Activated CD4-positive, alpha-beta memory T cell treated with anti-CD3 and anti-CD28 coated beads, Interleukin-2, amount 10 ng/mL, durations not matched to agents 7 days and 5 days (primary cell): ENCODE measurements at regions of chr19 and their contacts with region 1.

Region 1: GRCh38 chr19:49911381-49912145 is 14.9 kb upstream of the IL4I1 start:
- DNase-seq: no peak
- H3K4me3 Mint-ChIP-seq: no peak overlapping the region
- H3K27ac Mint-ChIP-seq: peak overlapping the region; percentile 71
- H3K4me1 Mint-ChIP-seq: peaks cover 46% of the 10 kb centered on the region
- H3K27me3 Mint-ChIP-seq: no peaks in the 10 kb centered on the region

Region 2: GRCh38 chr19:49712397-49712859 is 199.1 kb before region 1 on chr19:
- CTCF ChIA-PET with region 1: no interaction called
- POLR2A ChIA-PET with region 1: no interaction called
- DNase-seq: no peak
- H3K4me3 Mint-ChIP-seq: no peak overlapping the region
- H3K27ac Mint-ChIP-seq: no peak overlapping the region
- H3K4me1 Mint-ChIP-seq: peaks cover 13% of the 10 kb centered on the region
- H3K27me3 Mint-ChIP-seq: no peaks in the 10 kb centered on the region

Region 3: DNA sequence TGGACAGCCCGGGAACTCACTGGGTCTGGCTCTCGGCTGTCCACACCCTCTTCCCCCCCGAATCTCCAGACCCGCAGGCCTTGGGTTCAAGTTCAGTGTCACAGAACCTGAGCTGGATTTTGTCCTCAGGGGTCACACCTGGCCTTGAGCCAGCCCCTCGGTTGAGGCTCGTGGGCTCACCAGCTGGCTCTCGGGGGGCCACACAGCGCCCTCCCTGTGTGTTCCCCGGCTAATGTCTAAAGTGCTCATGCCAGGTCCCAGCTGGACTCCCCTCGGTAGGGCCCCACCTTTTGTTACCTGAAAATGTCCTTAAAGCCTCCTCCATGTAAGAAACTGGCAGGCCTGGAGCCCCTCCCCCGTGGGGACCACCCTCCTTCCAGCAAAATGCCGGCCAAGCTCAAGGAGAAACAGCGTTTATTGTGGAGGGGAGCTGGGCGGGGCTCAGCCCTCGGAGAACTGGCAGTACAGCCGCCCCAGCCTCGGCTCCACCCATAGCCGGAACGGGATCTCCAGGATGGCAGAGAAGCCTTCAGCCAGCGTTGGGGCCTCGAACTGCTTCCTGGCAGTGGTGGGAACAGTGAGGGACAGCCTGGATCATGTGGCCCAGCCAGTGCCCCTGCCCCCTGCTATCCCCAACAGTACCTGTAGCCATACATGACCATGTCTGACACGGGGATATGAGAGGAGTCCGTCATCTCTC is 50.6 kb before region 1 on chr19:
- CTCF ChIA-PET with region 1: no interaction called
- POLR2A ChIA-PET with region 1: no interaction called
- DNase-seq: no peak
- H3K4me3 Mint-ChIP-seq: no peak overlapping the region
- H3K27ac Mint-ChIP-seq: no peak overlapping the region
- H3K4me1 Mint-ChIP-seq: peaks cover 22% of the 10 kb centered on the region
- H3K27me3 Mint-ChIP-seq: no peaks in the 10 kb centered on the region

Region 4: GRCh38 chr19:49896863-49897621 is 14.5 kb before region 1 on chr19 and contains the start of gene IL4I1:
- CTCF ChIA-PET with region 1: no interaction called
- POLR2A ChIA-PET with region 1: interaction called, 10 read pairs
- DNase-seq: peak; percentile 76
- H3K4me3 Mint-ChIP-seq: peak within 1 kb of the TSS; percentile 80
- H3K27ac Mint-ChIP-seq: peak within 1 kb of the TSS; percentile 97
- H3K4me1 Mint-ChIP-seq: peaks cover 52% of the 10 kb centered on the region
- H3K27me3 Mint-ChIP-seq: no peaks in the 10 kb centered on the region
- total RNA-seq, gene IL4I1: 25.7 to 26.4 TPM